AG04449 (cell line): ENCODE measurements at regions of chr13 and their contacts with region 1.

Region 1: GRCh38 chr13:84588023-84588422 is 705.7 kb upstream of the SLITRK1 start:
- DNase-seq: no peak
- H3K4me3 ChIP-seq: no peak overlapping the region
- CTCF ChIP-seq: no peak

Region 2: GRCh38 chr13:84574851-84575250 is 13.2 kb before region 1 on chr13:
- CTCF ChIA-PET with region 1: interaction called, 10 read pairs
- POLR2A ChIA-PET with region 1: no interaction called
- DNase-seq: peak; percentile 4
- H3K4me3 ChIP-seq: no peak overlapping the region
- CTCF ChIP-seq: peak; percentile 22